ENCODE measurements at regions of chr10 and their contacts with region 1.

Region 1: GRCh38 chr10:80382989-80383388 is 25.4 kb upstream of the PRXL2A start:
- DNase-seq: peak; percentile 36
- ATAC-seq: peak in 1 of 2 donors; percentile 59

Region 2: DNA sequence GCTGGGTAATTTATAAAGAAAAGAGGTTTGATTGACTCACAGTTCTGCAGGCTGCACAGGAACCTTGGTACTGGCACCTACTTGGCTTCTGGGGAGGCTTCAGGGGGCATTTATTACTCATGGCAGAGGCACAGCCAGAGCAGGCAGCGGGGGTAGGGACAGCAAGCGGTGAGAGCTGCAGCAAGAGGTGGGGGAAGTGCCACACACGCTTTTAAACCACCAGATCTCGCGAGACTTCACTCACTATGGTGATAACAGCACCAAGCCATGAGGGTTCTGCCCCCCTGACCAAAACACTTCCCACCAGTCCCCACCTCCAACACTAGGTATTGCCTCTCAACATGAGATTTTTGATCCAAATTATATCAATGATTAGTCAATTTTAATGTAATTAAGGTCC is 69.5 kb before region 1 on chr10:
- intact Hi-C with region 1: no loop called
- DNase-seq: no peak
- ATAC-seq: no peak

Region 3: GRCh38 chr10:80500572-80501380 is 117.8 kb after region 1 on chr10:
- intact Hi-C with region 1: loop called (anchors 5 to 10 kb)
- DNase-seq: peak; percentile 69
- ATAC-seq: peak in 1 of 2 donors; percentile 28

Region 4: DNA sequence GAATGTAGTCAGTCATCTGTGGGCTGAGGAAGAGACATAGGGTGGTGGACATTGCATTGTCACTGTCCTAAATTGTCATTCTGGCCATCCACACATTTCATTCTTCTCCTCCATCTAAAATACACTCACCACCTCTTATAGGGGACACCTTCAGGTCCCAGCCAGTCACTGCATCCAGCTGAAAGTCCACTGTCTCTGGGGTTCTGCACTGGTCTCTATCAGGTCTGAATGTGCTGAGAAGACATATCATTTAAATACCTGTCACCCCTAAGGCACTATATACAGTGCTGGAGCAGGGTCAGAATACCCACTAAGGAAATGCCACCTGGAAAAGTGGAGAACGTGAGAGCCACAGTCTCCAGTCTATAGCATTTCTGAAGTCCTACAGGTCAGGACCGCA is 184.3 kb after region 1 on chr10:
- intact Hi-C with region 1: no loop called
- DNase-seq: no peak
- ATAC-seq: no peak

Region 5: GRCh38 chr10:81018708-81019365 is 635.8 kb after region 1 on chr10:
- intact Hi-C with region 1: no loop called
- DNase-seq: no peak
- ATAC-seq: peak in 1 of 2 donors; percentile 54

Measured in left cardiac atrium (tissue), 4 donors.